ENCODE measurements at regions of chr1 and their contacts with region 1.

Region 1: GRCh38 chr1:27257155-27257554 is 22.7 kb downstream of the WDTC1 start:
- DNase-seq: no peak
- ATAC-seq: no peak
- H3K4me3 ChIP-seq: no peak overlapping the region
- H3K27ac ChIP-seq: no peak overlapping the region
- H3K4me1 ChIP-seq: no peaks in the 10 kb centered on the region
- H3K27me3 ChIP-seq: no peaks in the 10 kb centered on the region
- CTCF ChIP-seq: no peak

Region 2: GRCh38 chr1:27111626-27112573 is 145.3 kb before region 1 on chr1:
- CTCF ChIA-PET with region 1: no interaction called
- POLR2A ChIA-PET with region 1: no interaction called
- in situ Hi-C with region 1: no loop called
- intact Hi-C with region 1: no loop called
- DNase-seq: peak; percentile 97
- ATAC-seq: peak; percentile 95
- H3K4me3 ChIP-seq: no peak overlapping the region
- H3K27ac ChIP-seq: peak overlapping the region; percentile 24
- H3K4me1 ChIP-seq: peaks cover 11% of the 10 kb centered on the region
- H3K27me3 ChIP-seq: no peaks in the 10 kb centered on the region
- CTCF ChIP-seq: no peak

Region 3: GRCh38 chr1:27135541-27136240 is 121.5 kb before region 1 on chr1:
- CTCF ChIA-PET with region 1: interaction called, 12 read pairs
- POLR2A ChIA-PET with region 1: interaction called, 5 read pairs
- in situ Hi-C with region 1: no loop called
- intact Hi-C with region 1: no loop called
- DNase-seq: no peak
- ATAC-seq: peak; percentile 47; the same call in 1 of the 2 replicates
- H3K4me3 ChIP-seq: no peak overlapping the region
- H3K27ac ChIP-seq: no peak overlapping the region
- H3K4me1 ChIP-seq: 0 out of 2 replicates have a peak, but pooled peaks cover 5% of the 10 kb centered on the region
- H3K27me3 ChIP-seq: no peaks in the 10 kb centered on the region
- CTCF ChIP-seq: no peak; the same call in 1 of the 2 replicates

Region 4: DNA sequence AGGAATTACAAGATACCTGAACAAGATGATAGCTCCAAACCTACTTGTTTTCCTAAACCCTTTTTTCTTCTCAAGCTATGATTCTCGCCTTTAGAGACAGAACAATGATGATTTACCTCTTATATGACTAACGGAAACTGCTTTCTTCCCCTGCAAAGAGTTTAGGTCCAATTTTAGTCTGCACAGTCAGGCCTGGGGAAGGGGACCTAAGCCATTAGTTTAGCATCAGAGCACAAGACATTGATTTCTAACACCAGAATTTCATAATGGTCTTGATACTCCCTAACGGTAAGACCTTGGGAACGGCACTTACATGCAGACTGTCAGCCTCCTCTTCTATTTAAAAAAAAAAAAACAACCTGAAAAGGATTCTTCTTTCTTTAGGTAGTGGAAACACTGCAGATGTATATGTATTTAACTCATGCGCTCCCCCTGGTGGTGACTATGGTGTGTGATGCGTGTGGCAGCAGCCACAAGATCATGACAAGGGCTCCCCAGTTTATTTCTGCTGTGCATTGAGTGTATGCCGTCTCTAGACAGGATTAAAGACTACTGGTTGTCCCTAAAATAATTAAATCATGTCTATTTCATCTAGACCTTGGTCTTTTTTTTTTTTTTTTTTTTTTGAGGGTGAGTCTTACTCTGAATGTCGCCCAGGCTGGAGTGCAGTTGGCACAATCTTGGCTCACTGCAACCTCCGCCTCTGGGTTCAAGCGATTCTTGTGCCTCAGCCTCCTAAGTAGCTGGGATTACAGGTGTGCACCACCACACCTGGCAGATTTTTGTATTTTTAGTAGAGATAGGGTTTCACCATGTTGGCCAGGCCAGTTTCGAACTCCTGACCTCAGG is 27.5 kb after region 1 on chr1:
- CTCF ChIA-PET with region 1: no interaction called
- POLR2A ChIA-PET with region 1: no interaction called
- in situ Hi-C with region 1: no loop called
- intact Hi-C with region 1: no loop called
- DNase-seq: peak; percentile 52
- ATAC-seq: peak; percentile 96
- H3K4me3 ChIP-seq: no peak overlapping the region
- H3K27ac ChIP-seq: no peak overlapping the region
- H3K4me1 ChIP-seq: no peaks in the 10 kb centered on the region
- H3K27me3 ChIP-seq: no peaks in the 10 kb centered on the region
- CTCF ChIP-seq: peak; percentile 89